ENCODE measurements at regions of chr1 and their contacts with region 1.

Region 1: DNA sequence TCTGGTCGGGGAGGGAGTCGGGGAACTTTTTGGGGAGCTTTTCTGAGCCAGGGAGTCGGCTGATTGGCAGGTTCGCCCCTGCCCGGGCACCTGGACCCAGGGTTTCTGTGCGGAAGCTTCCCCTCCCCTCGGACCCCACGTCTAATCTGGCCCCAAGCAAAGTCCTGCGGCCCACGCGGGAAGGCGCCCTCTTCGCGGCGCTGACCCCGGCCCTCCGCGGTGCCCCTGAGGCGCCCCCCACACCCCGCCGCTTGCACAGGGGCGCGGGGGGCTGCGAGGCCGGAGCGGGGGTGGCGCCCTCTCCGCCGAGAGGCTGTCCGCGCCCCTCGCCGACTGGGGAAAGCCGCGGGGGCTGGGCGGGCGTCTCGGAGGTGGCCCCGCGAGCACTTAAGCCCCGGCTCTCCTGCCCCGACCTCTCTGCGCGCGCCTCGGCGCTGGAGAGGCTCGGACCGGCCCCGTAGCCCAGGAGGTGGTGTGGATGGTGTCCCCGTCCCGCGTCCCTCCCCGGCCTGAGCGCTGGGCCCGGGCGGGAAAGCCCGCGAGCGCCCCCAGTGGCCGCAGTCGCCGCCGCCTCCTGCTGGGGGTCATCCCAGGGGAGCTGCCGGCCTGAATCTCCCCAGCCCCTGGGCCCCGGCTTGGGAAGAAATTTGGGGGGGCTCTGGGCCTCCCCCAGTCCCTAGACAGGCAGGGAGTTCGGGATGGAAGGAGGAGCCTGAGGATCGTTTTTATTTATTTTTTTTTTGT is 1.7 kb upstream of the HES4 start:
- DNase-seq: no peak
- H3K4me3 ChIP-seq: peak overlapping the region; percentile 66
- H3K27ac ChIP-seq: no peak overlapping the region
- H3K27me3 ChIP-seq: peaks cover 9% of the 10 kb centered on the region
- CTCF ChIP-seq: peak; percentile 67

Region 2: GRCh38 chr1:1013105-1013921 is 11.7 kb after region 1 on chr1 and contains the start of gene ISG15:
- CTCF ChIA-PET with region 1: interaction called, 11 read pairs
- POLR2A ChIA-PET with region 1: interaction called, 3 read pairs
- DNase-seq: peak; percentile 51
- H3K4me3 ChIP-seq: peak within 1 kb of the TSS; percentile 71
- H3K27ac ChIP-seq: peak within 1 kb of the TSS; percentile 70
- H3K27me3 ChIP-seq: no peaks in the 10 kb centered on the region
- CTCF ChIP-seq: no peak
- polyA plus RNA-seq, gene ISG15: 22.4 and 36.0 TPM in 2 replicates

Region 3: GRCh38 chr1:1019122-1019999 is 17.7 kb after region 1 on chr1:
- CTCF ChIA-PET with region 1: interaction called, 11 read pairs
- POLR2A ChIA-PET with region 1: interaction called, 6 read pairs
- DNase-seq: peak; percentile 37
- H3K4me3 ChIP-seq: peak overlapping the region; percentile 57
- H3K27ac ChIP-seq: no peak overlapping the region
- H3K27me3 ChIP-seq: no peaks in the 10 kb centered on the region
- CTCF ChIP-seq: peak; percentile 44

Region 4: DNA sequence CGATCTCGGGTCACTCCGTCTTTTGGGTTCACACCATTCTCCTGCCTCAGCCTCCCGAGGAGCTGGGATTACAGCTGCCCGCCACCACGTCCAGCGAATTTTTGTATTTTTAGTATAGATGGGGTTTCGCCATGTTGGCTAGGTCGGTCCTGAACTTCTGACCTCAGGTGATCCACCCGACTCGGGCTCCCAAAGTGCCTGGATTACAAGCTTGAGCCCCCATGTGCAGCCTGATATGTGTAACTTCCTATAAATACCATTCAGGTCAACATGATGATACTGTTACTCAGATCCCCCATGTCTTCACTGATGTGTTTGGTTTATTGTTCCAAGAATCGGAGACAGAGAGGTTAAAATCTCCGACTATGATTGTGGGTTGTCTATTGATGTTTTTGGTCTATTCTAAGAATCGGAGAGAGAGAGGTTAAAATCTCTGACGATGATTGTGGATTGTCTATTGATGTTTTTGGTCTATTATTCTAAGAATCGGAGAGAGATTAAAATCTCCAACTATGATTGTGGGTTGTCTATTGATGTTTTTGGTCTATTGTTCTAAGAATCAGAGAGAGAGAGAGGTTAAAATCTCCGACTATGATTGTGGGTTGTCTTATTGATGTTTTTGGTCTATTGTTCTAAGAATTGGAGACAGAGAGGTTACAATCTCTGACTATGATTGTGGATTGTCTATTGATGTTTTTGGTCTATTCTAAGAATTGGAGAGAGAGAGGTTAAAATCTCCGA is 97.2 kb after region 1 on chr1:
- CTCF ChIA-PET with region 1: no interaction called
- POLR2A ChIA-PET with region 1: no interaction called
- DNase-seq: no peak
- H3K4me3 ChIP-seq: no peak overlapping the region
- H3K27ac ChIP-seq: no peak overlapping the region
- H3K27me3 ChIP-seq: no peaks in the 10 kb centered on the region
- CTCF ChIP-seq: no peak

Region 5: GRCh38 chr1:1137256-1138045 is 135.8 kb after region 1 on chr1:
- CTCF ChIA-PET with region 1: no interaction called
- POLR2A ChIA-PET with region 1: no interaction called
- DNase-seq: no peak
- H3K4me3 ChIP-seq: no peak overlapping the region
- H3K27ac ChIP-seq: no peak overlapping the region
- H3K27me3 ChIP-seq: peaks cover 29% of the 10 kb centered on the region
- CTCF ChIP-seq: no peak

Measured in AG04450 (cell line).